ENCODE measurements at regions of chr11 and their contacts with region 1.

Region 1: GRCh38 chr11:12411806-12412727 is 34.7 kb downstream of the PARVA start:
- DNase-seq: peak; percentile 81
- H3K4me3 Mint-ChIP-seq: no peak overlapping the region
- H3K27ac Mint-ChIP-seq: peak overlapping the region; percentile 71
- H3K4me1 Mint-ChIP-seq: peaks cover 13% of the 10 kb centered on the region
- H3K27me3 Mint-ChIP-seq: no peaks in the 10 kb centered on the region
- CTCF ChIP-seq: peak; percentile 86

Region 2: DNA sequence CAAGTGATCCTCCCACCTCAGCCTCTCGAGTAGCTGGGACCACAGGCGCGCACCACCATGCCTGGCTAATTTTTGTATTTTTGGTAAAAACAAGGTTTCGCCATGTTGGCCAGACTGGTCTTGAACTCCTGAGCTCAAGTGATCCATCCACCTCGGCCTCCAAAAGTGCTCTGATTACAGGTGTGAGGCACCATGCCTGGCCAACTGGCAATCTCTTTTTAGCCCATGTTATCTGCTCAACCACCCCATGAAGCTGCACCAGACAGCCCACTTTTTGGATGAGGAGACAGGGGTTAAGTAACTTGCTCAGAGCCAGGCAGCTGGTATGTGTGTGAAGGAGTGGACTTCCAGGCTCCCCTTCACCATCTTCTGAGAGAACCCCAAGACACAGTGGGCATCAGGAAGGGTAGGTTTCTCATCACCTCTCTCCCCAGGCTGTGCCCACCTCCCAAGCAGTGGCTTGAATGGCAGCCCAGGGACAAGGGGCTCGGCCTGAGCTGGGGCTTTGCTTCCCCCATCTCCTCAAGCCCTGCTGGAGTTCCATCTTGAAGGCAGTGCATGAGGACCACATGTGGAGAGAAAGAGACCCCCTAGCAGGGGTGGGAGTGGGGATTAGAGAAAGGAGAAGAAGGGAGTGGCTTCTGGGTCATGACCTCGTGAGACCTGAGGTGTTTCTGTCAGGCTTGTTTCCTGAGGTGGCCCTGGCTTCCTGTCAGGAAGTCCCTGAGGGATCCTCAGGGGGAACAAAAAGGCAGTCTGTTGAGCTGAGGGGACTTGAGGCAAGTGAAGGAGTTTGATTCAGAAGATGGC is 122.2 kb before region 1 on chr11:
- CTCF ChIA-PET with region 1: no interaction called
- intact Hi-C with region 1: no loop called
- DNase-seq: no peak
- H3K4me3 Mint-ChIP-seq: no peak overlapping the region
- H3K27ac Mint-ChIP-seq: no peak overlapping the region
- H3K4me1 Mint-ChIP-seq: peaks cover 37% of the 10 kb centered on the region
- H3K27me3 Mint-ChIP-seq: no peaks in the 10 kb centered on the region
- CTCF ChIP-seq: no peak

Region 3: DNA sequence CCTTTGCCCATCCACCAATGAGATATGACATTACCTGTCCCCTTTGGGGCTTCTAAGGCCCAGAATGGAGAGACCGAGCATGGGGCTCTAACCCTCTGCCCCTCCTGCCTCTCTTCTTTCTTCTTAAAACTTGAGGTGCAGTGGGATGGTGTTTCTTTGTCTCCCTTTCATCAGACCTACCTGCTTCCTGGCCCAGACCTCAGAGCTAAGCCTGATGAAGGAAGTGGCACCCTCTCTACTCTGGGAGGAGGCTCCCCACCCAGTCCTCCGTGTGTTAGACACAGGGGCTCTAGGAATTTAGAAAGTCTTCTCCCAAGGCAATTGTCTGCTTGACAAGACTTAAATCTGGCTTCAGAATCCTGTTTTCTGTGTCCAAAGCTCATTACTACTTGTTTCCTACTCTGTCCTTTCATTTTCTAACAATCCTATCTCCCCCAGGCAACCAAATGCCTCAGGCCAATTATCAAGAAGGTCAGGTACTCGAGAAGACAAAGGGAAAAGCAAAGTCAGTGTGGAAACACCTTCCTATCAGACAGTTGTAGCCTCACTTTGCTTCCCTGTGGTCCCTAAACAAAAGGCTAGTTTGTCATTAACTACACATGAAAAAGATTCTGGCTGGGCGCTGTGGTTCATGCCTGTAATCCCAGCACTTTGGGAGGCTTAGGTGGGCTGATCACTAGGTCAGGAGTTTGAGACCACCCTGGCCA is 55.0 kb before region 1 on chr11:
- CTCF ChIA-PET with region 1: no interaction called
- intact Hi-C with region 1: no loop called
- DNase-seq: no peak
- H3K4me3 Mint-ChIP-seq: no peak overlapping the region
- H3K27ac Mint-ChIP-seq: no peak overlapping the region
- H3K4me1 Mint-ChIP-seq: peaks cover 44% of the 10 kb centered on the region
- H3K27me3 Mint-ChIP-seq: no peaks in the 10 kb centered on the region
- CTCF ChIP-seq: no peak

Region 4: GRCh38 chr11:12485328-12485727 is 73.3 kb after region 1 on chr11:
- CTCF ChIA-PET with region 1: interaction called, 3 read pairs
- intact Hi-C with region 1: loop called (anchors 2 kb)
- DNase-seq: no peak
- H3K4me3 Mint-ChIP-seq: no peak overlapping the region
- H3K27ac Mint-ChIP-seq: no peak overlapping the region
- H3K4me1 Mint-ChIP-seq: no peaks in the 10 kb centered on the region
- H3K27me3 Mint-ChIP-seq: no peaks in the 10 kb centered on the region
- CTCF ChIP-seq: peak; percentile 61

Region 5: GRCh38 chr11:12581923-12582322 is 169.9 kb after region 1 on chr11:
- CTCF ChIA-PET with region 1: no interaction called
- intact Hi-C with region 1: loop called (anchors 10 kb)
- DNase-seq: peak; percentile 12
- H3K4me3 Mint-ChIP-seq: no peak overlapping the region
- H3K27ac Mint-ChIP-seq: no peak overlapping the region
- H3K4me1 Mint-ChIP-seq: peaks cover 13% of the 10 kb centered on the region
- H3K27me3 Mint-ChIP-seq: no peaks in the 10 kb centered on the region
- CTCF ChIP-seq: no peak

Region 6: GRCh38 chr11:12664385-12664784 is 252.3 kb after region 1 on chr11:
- CTCF ChIA-PET with region 1: no interaction called
- intact Hi-C with region 1: no loop called
- DNase-seq: no peak
- H3K4me3 Mint-ChIP-seq: no peak overlapping the region
- H3K27ac Mint-ChIP-seq: no peak overlapping the region
- H3K4me1 Mint-ChIP-seq: peaks cover 12% of the 10 kb centered on the region
- H3K27me3 Mint-ChIP-seq: peaks cover 32% of the 10 kb centered on the region
- CTCF ChIP-seq: no peak

Region 7: GRCh38 chr11:12893787-12894672 is 482.0 kb after region 1 on chr11:
- CTCF ChIA-PET with region 1: no interaction called
- intact Hi-C with region 1: loop called (anchors 5 kb)
- DNase-seq: peak; percentile 74
- H3K4me3 Mint-ChIP-seq: no peak overlapping the region
- H3K27ac Mint-ChIP-seq: no peak overlapping the region
- H3K4me1 Mint-ChIP-seq: no peaks in the 10 kb centered on the region
- H3K27me3 Mint-ChIP-seq: no peaks in the 10 kb centered on the region
- CTCF ChIP-seq: peak; percentile 76